Activated T-helper 1 cell treated with anti-CD3 and anti-CD28 coated beads, Interleukin-12 subunit alpha, Interleukin-12 subunit beta, Interleukin-2, Interleukin-4 antibody, amounts not matched to agents 30 ng/mL and 10 ng/mL and 1 ng/mL, durations not matched to agents 14 hours and 24 hours and 36 hours (primary cell): ENCODE measurements at regions of chr1 and their contacts with region 1.

Region 1: DNA sequence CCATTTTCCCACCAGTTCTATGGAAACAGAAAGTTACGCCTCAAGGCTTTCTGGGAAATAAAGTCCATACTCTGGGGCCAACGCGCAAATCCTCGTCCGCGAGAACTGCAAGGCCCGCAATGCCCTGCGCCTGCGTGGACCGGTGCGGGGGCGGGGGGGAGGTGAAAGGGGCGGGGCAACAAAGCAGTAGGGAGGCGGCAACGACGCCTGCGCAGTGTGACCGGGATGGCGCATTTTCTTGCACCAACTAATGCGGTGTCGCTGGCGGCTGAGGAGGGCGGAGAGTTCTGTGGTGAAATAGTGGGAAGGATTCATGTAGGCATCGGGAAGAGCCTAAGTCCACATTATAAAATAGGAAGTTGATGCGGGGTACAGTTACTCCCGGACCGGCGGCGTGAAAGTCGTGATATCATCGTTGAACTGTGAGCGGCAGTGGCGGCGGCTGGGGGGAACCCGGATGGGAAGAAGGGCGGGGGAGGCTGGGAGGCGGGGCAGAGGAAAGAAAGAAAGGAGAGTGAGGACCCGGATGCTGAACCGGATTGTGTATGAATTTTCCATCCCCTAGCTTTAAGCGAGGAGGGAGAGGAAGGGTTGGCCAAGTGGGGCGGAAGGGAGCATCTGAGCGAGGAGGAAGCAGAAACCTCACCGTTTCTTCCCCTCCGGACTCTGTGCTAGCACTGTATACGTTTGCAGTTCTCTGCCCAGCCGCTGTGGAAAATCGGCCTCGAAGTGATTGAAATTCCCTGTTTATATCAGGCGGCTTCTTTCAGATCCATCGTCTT is at the start of gene GGPS1:
- DNase-seq: peak; percentile 94
- H3K4me3 Mint-ChIP-seq: no peak within 1 kb of the TSS
- H3K27ac Mint-ChIP-seq: no peak within 1 kb of the TSS
- H3K4me1 Mint-ChIP-seq: peaks cover 28% of the 10 kb centered on the region
- H3K27me3 Mint-ChIP-seq: no peaks in the 10 kb centered on the region
- total RNA-seq, gene GGPS1: 28.8 and 29.8 TPM in 2 replicates

Region 2: GRCh38 chr1:234373064-234373958 is 955.2 kb before region 1 on chr1 and contains the start of gene COA6:
- intact Hi-C with region 1: loop called (anchors 1 kb)
- DNase-seq: peak; percentile 85
- H3K4me3 Mint-ChIP-seq: peak within 1 kb of the TSS; percentile 97
- H3K27ac Mint-ChIP-seq: peak within 1 kb of the TSS; percentile 96
- H3K4me1 Mint-ChIP-seq: peaks cover 57% of the 10 kb centered on the region
- H3K27me3 Mint-ChIP-seq: peaks cover 2% of the 10 kb centered on the region
- total RNA-seq, gene COA6: 57.2 and 66.9 TPM in 2 replicates

Region 3: GRCh38 chr1:234963180-234963903 is 365.2 kb before region 1 on chr1:
- intact Hi-C with region 1: loop called (anchors 5 kb)
- DNase-seq: peak; percentile 87
- H3K4me3 Mint-ChIP-seq: peak overlapping the region; percentile 73
- H3K27ac Mint-ChIP-seq: peak overlapping the region; percentile 93
- H3K4me1 Mint-ChIP-seq: peaks cover 76% of the 10 kb centered on the region
- H3K27me3 Mint-ChIP-seq: no peaks in the 10 kb centered on the region

Region 4: DNA sequence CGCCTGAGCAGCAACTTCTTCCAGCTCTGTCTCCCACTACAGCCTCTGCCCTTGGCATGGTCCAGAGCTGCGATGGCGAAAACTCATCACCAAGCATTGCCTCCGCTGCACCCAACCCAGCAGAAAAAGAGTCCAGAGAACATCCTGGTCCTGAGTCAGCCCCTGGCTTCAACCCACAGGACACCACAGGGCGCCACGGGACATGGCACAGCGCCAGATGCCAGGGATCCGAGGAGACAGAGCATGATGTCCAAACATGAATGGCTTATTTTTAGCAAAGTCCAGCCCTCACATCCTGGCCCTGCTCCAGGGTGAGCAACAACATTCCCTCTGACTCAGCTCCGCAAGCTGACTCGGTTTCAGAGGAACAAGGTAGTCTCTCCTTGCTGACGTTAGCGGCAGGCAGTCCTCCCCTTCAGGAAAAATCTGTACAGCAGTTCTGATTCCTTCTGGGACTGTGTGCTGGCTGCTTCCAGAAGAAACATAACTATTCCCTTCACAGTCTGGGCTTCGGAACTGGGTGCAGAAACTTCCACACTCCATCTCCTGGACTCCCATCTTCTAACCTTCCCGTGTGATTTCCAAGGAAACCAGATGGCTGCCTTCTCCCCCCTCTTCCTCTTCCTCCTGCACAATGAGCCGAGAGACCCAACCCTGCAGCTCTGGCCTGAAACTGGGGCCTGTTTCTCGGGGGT is 331.2 kb before region 1 on chr1:
- intact Hi-C with region 1: no loop called
- DNase-seq: no peak
- H3K4me3 Mint-ChIP-seq: no peak overlapping the region
- H3K27ac Mint-ChIP-seq: no peak overlapping the region
- H3K4me1 Mint-ChIP-seq: peaks cover 38% of the 10 kb centered on the region
- H3K27me3 Mint-ChIP-seq: no peaks in the 10 kb centered on the region

Region 5: DNA sequence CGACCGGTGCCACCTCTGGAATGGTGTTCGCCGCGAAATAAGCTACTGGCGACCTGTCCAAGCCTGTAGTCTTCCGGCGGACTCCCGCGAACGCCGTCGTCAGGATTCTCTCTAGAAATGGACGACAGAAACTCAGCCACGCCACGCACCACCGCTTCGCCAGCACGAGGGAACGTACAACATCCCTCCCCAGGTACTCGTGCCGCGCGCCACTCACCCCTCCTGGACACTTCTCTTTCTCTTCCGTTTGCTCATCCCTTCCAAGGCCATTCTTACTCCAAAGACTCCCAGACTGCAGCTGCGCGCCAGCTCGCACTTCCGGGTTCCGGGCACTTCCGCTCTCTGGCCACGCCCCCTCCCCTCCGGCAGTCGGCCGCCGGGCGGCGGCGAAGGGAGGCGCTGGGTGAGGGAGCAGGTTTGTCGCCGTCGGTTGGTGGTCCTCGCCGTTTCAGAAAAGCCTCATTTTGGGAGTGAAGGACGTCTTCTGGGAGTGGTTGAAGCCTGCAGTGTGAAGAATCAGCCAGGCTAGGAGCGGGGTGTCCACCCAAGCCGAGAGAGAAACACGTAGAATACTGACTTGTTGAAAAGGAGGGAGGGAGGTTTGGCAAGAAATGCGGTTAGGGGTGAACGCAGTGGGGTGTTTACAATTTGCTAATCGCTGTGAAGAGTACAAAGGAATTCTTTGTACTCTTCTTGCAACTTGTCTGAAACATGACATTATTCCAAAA is 167.4 kb before region 1 on chr1 and contains the start of gene RBM34:
- intact Hi-C with region 1: loop called (anchors 1 kb)
- DNase-seq: peak; percentile 92
- H3K4me3 Mint-ChIP-seq: peak within 1 kb of the TSS; percentile 98
- H3K27ac Mint-ChIP-seq: peak within 1 kb of the TSS; percentile 97
- H3K4me1 Mint-ChIP-seq: peaks cover 16% of the 10 kb centered on the region
- H3K27me3 Mint-ChIP-seq: no peaks in the 10 kb centered on the region
- total RNA-seq, gene RBM34: 120 and 127 TPM in 2 replicates

Region 6: GRCh38 chr1:235275223-235275622 is 53.3 kb before region 1 on chr1:
- intact Hi-C with region 1: loop called (anchors 2 kb)
- DNase-seq: no peak
- H3K4me3 Mint-ChIP-seq: no peak overlapping the region
- H3K27ac Mint-ChIP-seq: peak overlapping the region; percentile 68
- H3K4me1 Mint-ChIP-seq: peaks cover 46% of the 10 kb centered on the region
- H3K27me3 Mint-ChIP-seq: no peaks in the 10 kb centered on the region

Region 7: DNA sequence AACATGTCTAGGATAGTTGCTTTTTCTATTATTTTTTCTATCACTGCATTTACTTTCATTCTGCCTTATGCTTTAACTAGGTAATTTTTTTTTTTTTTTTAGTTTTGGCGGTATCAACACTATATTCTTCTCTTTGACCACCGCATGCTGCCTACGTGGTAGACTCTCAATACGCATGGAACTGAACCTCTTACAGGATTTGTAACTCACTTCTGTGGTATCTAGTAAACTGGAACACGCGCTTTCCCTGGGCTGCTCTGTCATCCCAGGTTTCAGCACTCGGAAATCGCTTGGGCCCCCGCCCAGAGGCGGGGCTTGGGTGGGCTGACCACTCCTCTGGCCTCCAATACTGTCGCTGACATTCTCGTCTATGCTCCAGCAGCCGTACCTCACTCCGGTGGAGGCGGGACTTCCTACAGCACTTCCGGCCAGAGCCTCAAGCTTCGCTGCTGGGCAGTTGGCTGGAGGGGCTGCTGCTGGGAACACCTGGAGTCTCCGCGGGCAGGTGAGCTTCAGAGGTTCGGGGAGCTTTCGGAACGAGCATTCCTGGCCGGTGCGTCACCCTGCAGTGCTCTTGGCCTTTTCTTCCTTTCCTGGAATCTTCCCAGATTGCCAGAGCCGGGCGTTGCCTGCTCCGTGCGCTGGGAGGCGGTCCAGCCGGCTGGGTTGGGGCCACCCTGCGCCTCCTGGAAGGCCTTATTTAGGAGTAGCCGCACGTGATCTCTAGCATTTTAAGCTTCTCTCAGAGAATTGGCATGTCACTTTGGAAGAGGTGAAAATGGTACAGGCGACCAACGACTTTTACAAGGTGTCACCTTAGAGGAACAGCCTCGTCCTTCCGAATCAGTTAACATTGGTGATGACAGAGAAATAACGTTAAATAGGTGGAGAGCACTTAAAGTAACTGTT is 38.7 kb after region 1 on chr1 and contains the start of gene TBCE:
- intact Hi-C with region 1: loop called (anchors 1 kb)
- DNase-seq: peak; percentile 87
- H3K4me3 Mint-ChIP-seq: peak within 1 kb of the TSS; percentile 95
- H3K27ac Mint-ChIP-seq: peak within 1 kb of the TSS; percentile 93
- H3K4me1 Mint-ChIP-seq: peaks cover 34% of the 10 kb centered on the region
- H3K27me3 Mint-ChIP-seq: no peaks in the 10 kb centered on the region
- total RNA-seq, gene TBCE: 29.0 and 29.2 TPM in 2 replicates

Region 8: DNA sequence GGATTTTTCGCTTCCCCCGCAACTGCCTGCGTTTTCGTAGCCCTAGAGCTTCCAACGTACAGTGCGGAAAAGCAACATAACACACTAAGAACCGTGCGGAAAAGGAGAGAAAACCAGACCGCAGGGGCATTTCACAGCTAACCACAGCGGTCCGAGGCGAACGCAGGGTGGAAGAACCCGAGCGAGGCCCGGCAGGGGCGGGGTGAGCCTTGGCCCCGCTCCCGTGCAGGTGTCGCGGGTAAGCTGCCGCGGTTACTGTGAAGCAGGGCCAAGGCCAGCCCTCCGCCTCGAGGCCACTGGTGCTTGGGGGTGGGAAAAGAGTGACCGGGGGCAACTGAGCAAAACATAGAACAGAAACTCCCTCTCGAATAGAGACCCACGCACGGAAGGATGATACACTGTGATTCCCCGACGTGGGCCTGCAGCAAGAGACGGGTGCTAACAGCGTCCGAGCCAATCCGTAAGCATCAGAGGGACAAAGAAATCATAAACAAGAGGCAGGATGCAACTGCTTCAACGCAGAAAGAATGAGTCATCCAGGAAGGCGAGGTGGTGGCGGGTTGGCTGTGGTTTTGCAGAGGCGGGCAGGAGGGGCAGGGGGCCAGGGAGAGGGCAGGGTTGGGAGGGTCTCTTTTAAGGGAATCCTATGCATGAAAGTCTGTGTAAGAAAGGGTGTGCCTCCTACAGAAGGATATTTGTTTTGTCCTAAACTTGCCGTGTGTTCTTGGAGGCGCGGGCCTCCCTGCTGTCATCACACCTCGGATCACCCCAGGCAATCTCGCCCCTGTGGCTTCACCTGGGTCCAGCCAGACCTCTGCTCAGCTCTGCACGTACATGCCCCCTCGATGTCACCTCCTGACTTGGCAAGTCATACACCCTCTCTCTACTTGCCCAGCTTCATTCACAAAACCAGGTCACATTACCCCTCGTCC is 313.7 kb after region 1 on chr1:
- intact Hi-C with region 1: loop called (anchors 2 kb)
- DNase-seq: peak; percentile 76
- H3K4me3 Mint-ChIP-seq: peak overlapping the region; percentile 67
- H3K27ac Mint-ChIP-seq: peak overlapping the region; percentile 92
- H3K4me1 Mint-ChIP-seq: peaks cover 71% of the 10 kb centered on the region
- H3K27me3 Mint-ChIP-seq: peaks cover 17% of the 10 kb centered on the region